PC-9 (cell line): ENCODE measurements at regions of chr10 and their contacts with region 1.

Region 1: GRCh38 chr10:95835149-95835860 is 72.5 kb upstream of the CC2D2B start:
- DNase-seq: no peak
- H3K4me3 ChIP-seq: no peak overlapping the region
- H3K27ac ChIP-seq: no peak overlapping the region
- H3K4me1 ChIP-seq: no peaks in the 10 kb centered on the region
- H3K27me3 ChIP-seq: no peaks in the 10 kb centered on the region
- CTCF ChIP-seq: no peak

Region 2: GRCh38 chr10:95716466-95717224 is 118.7 kb before region 1 on chr10:
- CTCF ChIA-PET with region 1: no interaction called
- POLR2A ChIA-PET with region 1: no interaction called
- intact Hi-C with region 1: no loop called
- DNase-seq: no peak
- H3K4me3 ChIP-seq: no peak overlapping the region
- H3K27ac ChIP-seq: no peak overlapping the region
- H3K4me1 ChIP-seq: peaks cover 15% of the 10 kb centered on the region
- H3K27me3 ChIP-seq: no peaks in the 10 kb centered on the region
- CTCF ChIP-seq: no peak

Region 3: GRCh38 chr10:95796504-95796903 is 38.8 kb before region 1 on chr10:
- CTCF ChIA-PET with region 1: no interaction called
- POLR2A ChIA-PET with region 1: no interaction called
- intact Hi-C with region 1: loop called (anchors 2 kb)
- DNase-seq: no peak
- H3K4me3 ChIP-seq: no peak overlapping the region
- H3K27ac ChIP-seq: no peak overlapping the region
- H3K4me1 ChIP-seq: no peaks in the 10 kb centered on the region
- H3K27me3 ChIP-seq: no peaks in the 10 kb centered on the region
- CTCF ChIP-seq: no peak

Region 4: DNA sequence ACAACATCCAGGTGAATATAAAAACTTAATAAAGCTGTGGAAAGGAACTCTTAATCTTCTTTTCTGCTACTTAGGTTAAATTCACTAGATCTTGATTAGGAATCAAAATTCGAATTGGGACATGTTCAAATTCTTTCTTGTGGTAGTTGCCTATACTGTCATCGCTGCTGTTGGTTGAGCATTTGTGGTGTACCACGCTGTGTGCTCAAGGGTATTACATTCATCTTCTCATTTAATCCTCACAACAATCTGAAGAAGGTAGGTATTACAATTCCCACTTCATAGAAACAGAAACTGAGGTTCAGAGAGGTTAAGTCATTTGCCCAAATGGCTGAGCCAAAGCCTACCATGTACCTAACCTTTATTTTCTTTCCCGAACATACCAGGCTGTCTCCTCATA is 32.6 kb after region 1 on chr10:
- CTCF ChIA-PET with region 1: no interaction called
- POLR2A ChIA-PET with region 1: no interaction called
- intact Hi-C with region 1: no loop called
- DNase-seq: no peak
- H3K4me3 ChIP-seq: no peak overlapping the region
- H3K27ac ChIP-seq: no peak overlapping the region
- H3K4me1 ChIP-seq: no peaks in the 10 kb centered on the region
- H3K27me3 ChIP-seq: no peaks in the 10 kb centered on the region
- CTCF ChIP-seq: no peak

Region 5: GRCh38 chr10:95920798-95921426 is 85.6 kb after region 1 on chr10:
- CTCF ChIA-PET with region 1: no interaction called
- POLR2A ChIA-PET with region 1: no interaction called
- intact Hi-C with region 1: no loop called
- DNase-seq: no peak
- H3K4me3 ChIP-seq: no peak overlapping the region
- H3K27ac ChIP-seq: no peak overlapping the region
- H3K4me1 ChIP-seq: no peaks in the 10 kb centered on the region
- H3K27me3 ChIP-seq: no peaks in the 10 kb centered on the region
- CTCF ChIP-seq: no peak